MCF 10A (cell line): ENCODE measurements at regions of chr10 and their contacts with region 1.

Region 1: DNA sequence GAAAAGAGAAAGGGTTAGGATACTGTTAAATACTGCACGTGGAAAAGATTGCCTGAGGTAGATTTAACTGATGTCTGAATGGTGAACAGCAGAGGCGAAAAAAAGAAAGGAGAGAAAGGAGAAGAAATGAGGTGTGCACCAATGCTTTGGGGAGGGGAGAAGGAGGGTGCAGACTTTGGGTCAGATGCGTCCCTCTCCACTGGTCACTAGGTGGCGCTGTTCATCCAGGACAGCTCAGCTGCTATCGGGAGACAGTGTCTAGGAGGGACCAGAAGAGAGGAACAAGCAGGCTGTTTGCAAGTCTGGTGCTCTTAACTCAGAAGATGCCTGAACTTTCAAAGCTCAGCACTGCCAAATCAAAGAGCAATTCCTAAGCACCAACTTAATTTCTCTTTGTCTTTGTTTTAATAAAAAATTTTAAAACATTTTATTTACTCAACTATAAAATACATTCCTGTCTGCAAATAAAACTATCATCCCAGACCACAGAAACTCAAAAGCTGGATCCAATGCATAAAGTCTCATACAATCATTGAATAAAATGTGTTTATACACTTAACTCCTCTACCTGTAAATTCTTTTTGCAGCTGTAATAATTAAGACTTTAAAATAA is 83.9 kb upstream of the PDLIM1 start:
- DNase-seq: peak; percentile 88
- H3K4me3 Mint-ChIP-seq: no peak overlapping the region
- H3K27ac Mint-ChIP-seq: no peak overlapping the region
- H3K4me1 Mint-ChIP-seq: no peaks in the 10 kb centered on the region
- H3K27me3 Mint-ChIP-seq: peaks cover 29% of the 10 kb centered on the region
- CTCF ChIP-seq: peak; percentile 95

Region 2: DNA sequence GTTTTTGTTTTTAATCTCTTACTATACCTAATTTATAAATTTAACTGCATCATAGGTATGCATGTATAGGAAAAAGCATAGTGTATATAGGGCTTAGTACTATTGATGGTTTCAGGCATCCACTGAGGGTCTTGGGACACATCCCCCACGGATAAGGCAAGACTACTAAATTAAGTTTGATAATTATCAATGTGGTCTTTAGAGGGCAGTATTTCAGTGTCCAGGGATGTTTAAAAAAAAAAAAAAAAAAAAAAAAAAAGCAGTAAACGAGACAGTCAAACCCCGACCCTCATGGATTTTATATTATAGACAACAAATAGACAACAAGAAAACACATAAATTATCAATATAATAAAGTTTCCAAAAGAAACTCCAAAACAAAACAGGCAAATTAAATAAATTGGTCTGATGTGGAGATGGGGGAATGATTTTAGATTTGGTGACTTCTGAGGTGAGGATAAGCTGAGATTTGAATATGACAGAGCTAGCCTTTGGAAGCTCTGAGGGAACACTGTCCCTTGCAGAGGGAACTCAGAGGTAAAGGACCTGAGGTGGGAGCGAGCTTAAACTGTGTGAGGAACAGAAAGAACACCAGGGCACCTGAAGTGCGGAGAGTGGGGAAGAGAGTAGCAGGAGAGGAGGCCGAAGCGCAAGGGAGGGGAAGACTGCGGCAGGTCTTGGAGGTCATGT is 165.9 kb before region 1 on chr10:
- CTCF ChIA-PET with region 1: interaction called, 10 read pairs
- POLR2A ChIA-PET with region 1: no interaction called
- intact Hi-C with region 1: no loop called
- DNase-seq: peak; percentile 20
- H3K4me3 Mint-ChIP-seq: no peak overlapping the region
- H3K27ac Mint-ChIP-seq: no peak overlapping the region
- H3K4me1 Mint-ChIP-seq: no peaks in the 10 kb centered on the region
- H3K27me3 Mint-ChIP-seq: no peaks in the 10 kb centered on the region
- CTCF ChIP-seq: peak; percentile 29

Region 3: DNA sequence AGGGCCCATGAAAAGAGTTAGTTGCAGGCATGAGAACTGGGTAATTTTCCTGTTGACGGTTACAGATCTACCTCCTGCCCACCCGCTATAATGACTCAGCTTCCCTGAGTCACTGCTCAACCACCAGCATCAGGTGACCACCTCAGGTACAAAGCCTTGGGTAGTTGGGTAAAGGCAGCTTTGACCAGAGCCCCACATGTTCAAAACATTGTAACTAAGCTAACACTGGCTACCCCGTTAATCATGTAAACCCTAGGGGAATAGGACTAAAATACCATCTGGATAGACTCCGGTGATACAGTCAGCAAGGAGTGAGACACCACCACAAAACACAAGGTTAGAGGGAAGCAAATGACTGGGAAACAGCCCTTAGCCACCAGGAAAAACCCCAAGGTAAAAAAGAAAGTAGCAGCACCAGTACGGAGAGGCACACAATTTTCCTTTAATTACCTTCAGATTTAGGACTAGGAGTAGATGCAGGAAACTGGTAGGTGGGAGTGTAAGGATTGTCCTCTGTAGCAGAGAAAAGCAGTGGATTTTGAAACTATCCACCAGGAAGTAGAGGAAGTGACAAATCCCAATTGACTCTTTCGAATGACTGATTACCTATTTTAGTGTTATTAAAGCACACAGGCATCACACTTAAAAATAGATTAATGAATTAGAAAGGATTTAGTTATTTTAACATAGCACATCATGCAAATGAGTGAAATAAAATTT is 19.6 kb after region 1 on chr10:
- CTCF ChIA-PET with region 1: interaction called, 100 read pairs
- POLR2A ChIA-PET with region 1: no interaction called
- intact Hi-C with region 1: no loop called
- DNase-seq: peak; percentile 83
- H3K4me3 Mint-ChIP-seq: peak overlapping the region; percentile 48
- H3K27ac Mint-ChIP-seq: peak overlapping the region; percentile 92
- H3K4me1 Mint-ChIP-seq: peaks cover 17% of the 10 kb centered on the region
- H3K27me3 Mint-ChIP-seq: no peaks in the 10 kb centered on the region
- CTCF ChIP-seq: no peak

Region 4: DNA sequence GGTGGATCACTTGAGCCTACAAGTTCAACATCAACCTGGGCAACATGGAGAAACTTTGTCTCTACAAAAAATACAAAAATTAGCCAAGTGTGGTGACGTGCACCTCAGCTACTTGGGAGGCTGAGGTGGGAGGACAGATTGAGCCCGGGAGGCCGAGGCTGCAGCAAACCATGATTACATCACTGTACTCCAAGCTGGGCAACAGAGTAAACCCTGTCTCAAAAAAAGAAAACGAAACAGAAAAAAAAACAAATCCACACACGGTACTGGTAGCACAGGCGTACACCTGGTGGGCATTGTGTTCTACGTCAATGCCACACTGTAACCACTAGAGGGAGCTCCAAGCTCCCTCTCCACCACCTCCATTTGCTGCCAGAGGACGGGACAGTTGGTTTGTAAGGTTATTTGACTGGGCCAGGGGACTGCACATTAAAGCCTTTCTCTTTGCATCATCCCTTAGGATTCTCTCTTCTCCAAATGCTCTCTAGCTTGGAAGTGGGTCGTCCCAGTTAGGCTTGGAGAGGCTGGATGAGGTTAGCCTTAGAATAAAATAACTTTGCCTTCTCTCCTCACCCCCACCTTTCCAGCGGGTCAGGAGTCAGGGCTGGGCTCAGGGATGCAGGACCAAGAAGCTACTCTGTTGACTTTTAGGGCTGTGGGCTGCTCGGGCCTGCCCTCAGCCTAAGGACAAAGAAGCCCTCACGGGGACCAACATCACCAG is 55.7 kb after region 1 on chr10:
- CTCF ChIA-PET with region 1: interaction called, 185 read pairs
- POLR2A ChIA-PET with region 1: interaction called, 7 read pairs
- intact Hi-C with region 1: loop called (anchors 1 kb)
- DNase-seq: peak; percentile 73
- H3K4me3 Mint-ChIP-seq: no peak overlapping the region
- H3K27ac Mint-ChIP-seq: no peak overlapping the region
- H3K4me1 Mint-ChIP-seq: peaks cover 11% of the 10 kb centered on the region
- H3K27me3 Mint-ChIP-seq: peaks cover 7% of the 10 kb centered on the region
- CTCF ChIP-seq: peak; percentile 89

Region 5: DNA sequence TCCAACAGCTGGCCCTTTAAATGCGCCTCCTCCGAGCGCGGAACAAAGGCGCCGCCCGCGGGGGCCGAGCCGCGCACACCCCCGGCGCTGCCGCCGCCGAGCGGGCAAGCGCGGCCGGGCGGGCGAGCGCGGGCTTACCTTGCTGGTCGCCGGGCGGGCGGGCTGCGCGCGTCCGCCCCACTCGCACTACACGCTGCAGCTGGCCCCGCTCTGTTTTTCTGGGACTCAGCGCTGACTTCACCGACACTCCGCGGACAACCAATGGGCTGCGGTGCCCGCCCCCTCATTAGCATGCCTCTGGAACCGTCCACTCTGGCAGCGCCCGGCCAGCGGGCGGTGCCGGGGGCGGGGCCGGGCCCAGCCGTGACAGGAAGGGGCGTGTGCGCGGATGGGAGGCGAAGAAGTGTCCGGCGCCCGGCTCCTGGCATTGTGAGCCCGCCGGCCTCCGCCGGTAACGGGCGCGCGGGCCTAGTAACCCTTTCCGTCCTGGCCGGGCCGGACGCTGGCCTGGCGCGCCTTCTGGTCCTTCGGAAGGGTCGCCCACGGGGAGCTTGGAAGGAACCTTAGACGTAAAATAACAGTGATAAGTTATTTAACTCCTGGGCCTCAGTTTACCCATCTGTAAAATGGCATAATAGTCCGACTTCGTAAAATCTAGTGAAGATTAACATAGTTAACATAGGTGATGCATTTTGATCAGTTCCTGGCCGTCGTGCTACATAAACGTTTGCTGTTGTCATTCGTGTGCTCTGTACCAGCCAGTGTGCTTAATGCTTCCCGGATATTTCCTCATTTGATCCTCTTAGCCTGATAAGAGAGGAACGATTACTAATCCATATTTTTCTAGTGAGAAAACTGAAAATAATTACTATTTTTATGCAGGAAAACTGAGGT is 186.7 kb after region 1 on chr10 and contains the start of gene SORBS1:
- CTCF ChIA-PET with region 1: interaction called, 12 read pairs
- POLR2A ChIA-PET with region 1: no interaction called
- intact Hi-C with region 1: no loop called
- DNase-seq: peak; percentile 96
- H3K4me3 Mint-ChIP-seq: peak within 1 kb of the TSS; percentile 88
- H3K27ac Mint-ChIP-seq: no peak within 1 kb of the TSS
- H3K4me1 Mint-ChIP-seq: no peaks in the 10 kb centered on the region
- H3K27me3 Mint-ChIP-seq: peaks cover 35% of the 10 kb centered on the region
- CTCF ChIP-seq: no peak
- total RNA-seq, gene SORBS1: 0.61 and 1.0 TPM in 2 replicates

Region 6: DNA sequence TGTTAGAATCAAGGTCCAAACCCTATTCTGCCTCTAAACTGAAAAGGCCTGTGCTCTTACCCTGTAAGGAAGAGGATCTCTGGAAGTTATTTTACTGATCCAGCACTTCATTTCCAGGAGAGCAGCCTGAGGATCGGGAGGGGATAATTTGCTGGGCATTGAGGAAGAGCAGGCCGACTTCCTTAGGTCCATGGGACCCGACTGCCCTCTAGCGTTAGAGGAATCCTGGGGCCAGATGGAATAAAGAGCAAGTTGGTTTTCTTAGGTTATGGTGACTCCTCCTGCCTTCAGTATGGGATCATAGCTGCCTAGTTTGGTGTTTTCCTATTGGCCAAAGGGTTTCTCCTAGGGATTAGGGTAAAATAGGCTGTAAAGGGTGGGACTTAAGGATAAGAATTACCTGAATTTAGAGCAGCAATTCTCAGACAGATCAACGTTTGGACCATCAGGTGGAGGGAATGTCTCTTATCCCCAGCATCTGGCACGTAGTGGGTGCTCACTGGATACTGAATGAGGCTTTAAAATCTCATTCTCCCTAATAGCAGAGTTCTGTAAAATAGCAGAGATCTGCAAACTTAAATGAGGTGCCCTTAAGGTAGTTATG is 226.5 kb after region 1 on chr10:
- CTCF ChIA-PET with region 1: interaction called, 333 read pairs
- POLR2A ChIA-PET with region 1: interaction called, 5 read pairs
- intact Hi-C with region 1: loop called (anchors 1 kb)
- DNase-seq: peak; percentile 89
- H3K4me3 Mint-ChIP-seq: no peak overlapping the region
- H3K27ac Mint-ChIP-seq: no peak overlapping the region
- H3K4me1 Mint-ChIP-seq: no peaks in the 10 kb centered on the region
- H3K27me3 Mint-ChIP-seq: peaks cover 21% of the 10 kb centered on the region
- CTCF ChIP-seq: peak; percentile 87

Region 7: GRCh38 chr10:95693668-95694534 is 319.2 kb after region 1 on chr10 and contains the start of gene TCTN3:
- CTCF ChIA-PET with region 1: interaction called, 6 read pairs
- POLR2A ChIA-PET with region 1: interaction called, 3 read pairs
- intact Hi-C with region 1: loop called (anchors 10 kb)
- DNase-seq: peak; percentile 100
- H3K4me3 Mint-ChIP-seq: peak within 1 kb of the TSS; percentile 99
- H3K27ac Mint-ChIP-seq: peak within 1 kb of the TSS; percentile 98
- H3K4me1 Mint-ChIP-seq: peaks cover 23% of the 10 kb centered on the region
- H3K27me3 Mint-ChIP-seq: no peaks in the 10 kb centered on the region
- CTCF ChIP-seq: peak; percentile 92
- total RNA-seq, gene TCTN3: 32.5 and 37.3 TPM in 2 replicates